CD8-positive, alpha-beta T cell (primary cell): ENCODE measurements at regions of chr4 and their contacts with region 1.

Region 1: GRCh38 chr4:121307445-121308327 is 73.1 kb downstream of the QRFPR start:
- DNase-seq: peak in 6 of 9 experiments; percentile 8 to 79 (median 42)
- ATAC-seq: peak; percentile 38
- H3K4me3 ChIP-seq: no peak overlapping the region
- H3K4me3 Mint-ChIP-seq: no peak overlapping the region
- H3K27ac ChIP-seq: no peak overlapping the region
- H3K27ac Mint-ChIP-seq: peak overlapping the region; percentile 38
- H3K4me1 ChIP-seq: peaks cover 4% of the 10 kb centered on the region
- H3K4me1 Mint-ChIP-seq: peaks cover 12% of the 10 kb centered on the region
- H3K27me3 ChIP-seq: no peaks in the 10 kb centered on the region
- H3K27me3 Mint-ChIP-seq: peaks cover 5% of the 10 kb centered on the region
- CTCF ChIP-seq: peak; percentile 89

Region 2: GRCh38 chr4:120066517-120067340 is 1241.0 kb before region 1 on chr4 and contains the start of gene MAD2L1:
- CTCF ChIA-PET with region 1: interaction called, 3 read pairs
- POLR2A ChIA-PET with region 1: no interaction called
- intact Hi-C with region 1: loop called (anchors 1 to 5 kb)
- DNase-seq: peak; percentile 96 to 100 (median 99)
- ATAC-seq: peak; percentile 89
- H3K4me3 ChIP-seq: peak within 1 kb of the TSS; percentile 53 to 84
- H3K4me3 Mint-ChIP-seq: peak within 1 kb of the TSS; percentile 96
- H3K27ac ChIP-seq: peak within 1 kb of the TSS; percentile 79 to 96
- H3K27ac Mint-ChIP-seq: peak within 1 kb of the TSS; percentile 98
- H3K4me1 ChIP-seq: peaks cover 17% of the 10 kb centered on the region
- H3K4me1 Mint-ChIP-seq: peaks cover 66% of the 10 kb centered on the region
- H3K27me3 ChIP-seq: no peaks in the 10 kb centered on the region
- H3K27me3 Mint-ChIP-seq: no peaks in the 10 kb centered on the region
- CTCF ChIP-seq: no peak
- total RNA-seq, gene MAD2L1: 7.4 to 9.1 TPM

Region 3: DNA sequence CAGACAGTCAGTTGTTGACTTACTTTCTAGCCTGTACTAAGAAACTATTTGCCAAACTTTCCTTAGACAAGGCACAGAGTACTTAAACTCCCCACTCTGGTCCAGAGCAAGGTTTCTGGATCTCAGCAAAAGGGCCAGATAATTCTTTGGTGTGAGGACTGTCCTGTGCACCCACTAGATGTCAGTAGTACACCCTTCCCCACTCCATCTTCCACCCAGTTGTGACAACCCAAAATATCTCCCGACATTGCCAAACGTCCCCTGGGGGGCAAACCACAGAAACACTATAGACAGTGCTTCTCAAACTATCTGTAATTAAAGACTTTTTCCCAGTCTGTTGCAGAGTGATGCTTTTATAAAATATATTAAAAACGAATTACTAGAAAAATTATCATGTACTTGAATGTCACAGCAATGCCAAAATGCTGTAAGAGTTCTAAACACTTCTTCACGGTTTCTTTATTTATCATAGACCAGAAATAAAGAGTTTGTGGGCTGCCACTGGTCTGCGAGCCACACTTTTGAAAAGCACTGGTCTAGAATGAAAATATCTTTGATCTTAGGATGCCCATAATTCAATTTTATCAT is 588.6 kb before region 1 on chr4:
- CTCF ChIA-PET with region 1: no interaction called
- POLR2A ChIA-PET with region 1: no interaction called
- intact Hi-C with region 1: loop called (anchors 1 to 5 kb)
- DNase-seq: peak in 4 of 9 experiments; percentile 17 to 63 (median 33)
- ATAC-seq: peak; percentile 46
- H3K4me3 ChIP-seq: no peak overlapping the region
- H3K4me3 Mint-ChIP-seq: no peak overlapping the region
- H3K27ac ChIP-seq: no peak overlapping the region
- H3K27ac Mint-ChIP-seq: no peak overlapping the region
- H3K4me1 ChIP-seq: no peaks in the 10 kb centered on the region
- H3K4me1 Mint-ChIP-seq: no peaks in the 10 kb centered on the region
- H3K27me3 ChIP-seq: no peaks in the 10 kb centered on the region
- H3K27me3 Mint-ChIP-seq: peaks cover 3% of the 10 kb centered on the region
- CTCF ChIP-seq: peak; percentile 33

Region 4: GRCh38 chr4:120977435-120977997 is 330.2 kb before region 1 on chr4:
- CTCF ChIA-PET with region 1: interaction called, 3 read pairs
- POLR2A ChIA-PET with region 1: no interaction called
- intact Hi-C with region 1: loop called in 1 of 2 experiments (anchors 10 kb)
- DNase-seq: peak in 2 of 9 experiments; percentile 38 to 50
- ATAC-seq: peak; percentile 64
- H3K4me3 ChIP-seq: no peak overlapping the region
- H3K4me3 Mint-ChIP-seq: no peak overlapping the region
- H3K27ac ChIP-seq: no peak overlapping the region
- H3K27ac Mint-ChIP-seq: no peak overlapping the region
- H3K4me1 ChIP-seq: no peaks in the 10 kb centered on the region
- H3K4me1 Mint-ChIP-seq: peaks cover 2% of the 10 kb centered on the region
- H3K27me3 ChIP-seq: no peaks in the 10 kb centered on the region
- H3K27me3 Mint-ChIP-seq: no peaks in the 10 kb centered on the region
- CTCF ChIP-seq: peak; percentile 45

Region 5: GRCh38 chr4:121064482-121064881 is 243.2 kb before region 1 on chr4:
- CTCF ChIA-PET with region 1: no interaction called
- POLR2A ChIA-PET with region 1: no interaction called
- intact Hi-C with region 1: no loop called
- DNase-seq: no peak
- ATAC-seq: no peak
- H3K4me3 ChIP-seq: no peak overlapping the region
- H3K4me3 Mint-ChIP-seq: no peak overlapping the region
- H3K27ac ChIP-seq: no peak overlapping the region
- H3K27ac Mint-ChIP-seq: no peak overlapping the region
- H3K4me1 ChIP-seq: no peaks in the 10 kb centered on the region
- H3K4me1 Mint-ChIP-seq: no peaks in the 10 kb centered on the region
- H3K27me3 ChIP-seq: no peaks in the 10 kb centered on the region
- H3K27me3 Mint-ChIP-seq: peaks cover 9% of the 10 kb centered on the region
- CTCF ChIP-seq: no peak

Region 6: DNA sequence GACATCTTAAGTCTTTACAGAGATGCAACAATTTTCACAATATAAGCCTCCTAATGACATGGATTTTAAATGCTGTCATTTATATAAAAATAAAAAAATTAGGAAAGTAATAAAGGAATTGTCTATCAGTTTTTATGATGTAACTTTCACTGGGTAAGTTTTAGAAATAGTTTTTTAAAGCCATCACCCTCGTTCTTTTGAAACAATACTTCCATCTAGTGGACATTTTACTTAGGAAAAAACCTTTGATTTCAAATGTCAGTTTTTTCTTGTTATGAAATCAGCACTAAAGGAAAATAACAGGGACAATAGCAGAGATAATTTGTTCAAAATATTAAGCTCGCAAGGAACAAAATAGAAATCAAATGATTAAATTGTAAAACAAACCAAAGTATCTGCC is 211.1 kb before region 1 on chr4:
- CTCF ChIA-PET with region 1: interaction called, 6 read pairs
- POLR2A ChIA-PET with region 1: no interaction called
- intact Hi-C with region 1: loop called (anchors 5 kb)
- DNase-seq: peak in 2 of 9 experiments; percentile 20 to 52
- ATAC-seq: no peak
- H3K4me3 ChIP-seq: no peak overlapping the region
- H3K4me3 Mint-ChIP-seq: no peak overlapping the region
- H3K27ac ChIP-seq: no peak overlapping the region
- H3K27ac Mint-ChIP-seq: no peak overlapping the region
- H3K4me1 ChIP-seq: no peaks in the 10 kb centered on the region
- H3K4me1 Mint-ChIP-seq: peaks cover 2% of the 10 kb centered on the region
- H3K27me3 ChIP-seq: no peaks in the 10 kb centered on the region
- H3K27me3 Mint-ChIP-seq: no peaks in the 10 kb centered on the region
- CTCF ChIP-seq: peak; percentile 77

Region 7: GRCh38 chr4:121199742-121200561 is 107.7 kb before region 1 on chr4:
- CTCF ChIA-PET with region 1: interaction called, 29 read pairs
- POLR2A ChIA-PET with region 1: no interaction called
- intact Hi-C with region 1: no loop called
- DNase-seq: peak in 6 of 9 experiments; percentile 11 to 79 (median 37)
- ATAC-seq: peak; percentile 87
- H3K4me3 ChIP-seq: peak overlapping the region in 1 of 2 experiments; percentile 6
- H3K4me3 Mint-ChIP-seq: peak overlapping the region; percentile 32
- H3K27ac ChIP-seq: peak overlapping the region in 1 of 2 experiments; percentile 52
- H3K27ac Mint-ChIP-seq: peak overlapping the region; percentile 19
- H3K4me1 ChIP-seq: peaks cover 19% of the 10 kb centered on the region
- H3K4me1 Mint-ChIP-seq: peaks cover 22% of the 10 kb centered on the region
- H3K27me3 ChIP-seq: no peaks in the 10 kb centered on the region
- H3K27me3 Mint-ChIP-seq: no peaks in the 10 kb centered on the region
- CTCF ChIP-seq: peak; percentile 27

Region 8: GRCh38 chr4:121252224-121252806 is 55.4 kb before region 1 on chr4:
- CTCF ChIA-PET with region 1: interaction called, 13 read pairs
- POLR2A ChIA-PET with region 1: no interaction called
- intact Hi-C with region 1: loop called in 1 of 2 experiments (anchors 2 kb)
- DNase-seq: peak in 8 of 9 experiments; percentile 30 to 80 (median 62)
- ATAC-seq: no peak
- H3K4me3 ChIP-seq: no peak overlapping the region
- H3K4me3 Mint-ChIP-seq: no peak overlapping the region
- H3K27ac ChIP-seq: peak overlapping the region in 1 of 2 experiments; percentile 95
- H3K27ac Mint-ChIP-seq: peak overlapping the region; percentile 55
- H3K4me1 ChIP-seq: peaks cover 36% of the 10 kb centered on the region
- H3K4me1 Mint-ChIP-seq: peaks cover 59% of the 10 kb centered on the region
- H3K27me3 ChIP-seq: no peaks in the 10 kb centered on the region
- H3K27me3 Mint-ChIP-seq: no peaks in the 10 kb centered on the region
- CTCF ChIP-seq: peak; percentile 85

Region 9: GRCh38 chr4:121439669-121440068 is 132.0 kb after region 1 on chr4:
- CTCF ChIA-PET with region 1: no interaction called
- POLR2A ChIA-PET with region 1: no interaction called
- intact Hi-C with region 1: no loop called
- DNase-seq: no peak
- ATAC-seq: no peak
- H3K4me3 ChIP-seq: no peak overlapping the region
- H3K4me3 Mint-ChIP-seq: no peak overlapping the region
- H3K27ac ChIP-seq: no peak overlapping the region
- H3K27ac Mint-ChIP-seq: no peak overlapping the region
- H3K4me1 ChIP-seq: no peaks in the 10 kb centered on the region
- H3K4me1 Mint-ChIP-seq: no peaks in the 10 kb centered on the region
- H3K27me3 ChIP-seq: no peaks in the 10 kb centered on the region
- H3K27me3 Mint-ChIP-seq: peaks cover 29% of the 10 kb centered on the region
- CTCF ChIP-seq: no peak

Region 10: GRCh38 chr4:121479783-121480182 is 172.1 kb after region 1 on chr4:
- CTCF ChIA-PET with region 1: no interaction called
- POLR2A ChIA-PET with region 1: no interaction called
- intact Hi-C with region 1: no loop called
- DNase-seq: no peak
- ATAC-seq: no peak
- H3K4me3 ChIP-seq: no peak overlapping the region
- H3K4me3 Mint-ChIP-seq: no peak overlapping the region
- H3K27ac ChIP-seq: no peak overlapping the region
- H3K27ac Mint-ChIP-seq: no peak overlapping the region
- H3K4me1 ChIP-seq: no peaks in the 10 kb centered on the region
- H3K4me1 Mint-ChIP-seq: no peaks in the 10 kb centered on the region
- H3K27me3 ChIP-seq: peaks cover 0 to 3% of the 10 kb centered on the region in 2 experiments
- H3K27me3 Mint-ChIP-seq: peaks cover 7% of the 10 kb centered on the region
- CTCF ChIP-seq: no peak